ENCODE measurements at regions of chr20 and their contacts with region 1.

Region 1: GRCh38 chr20:35541783-35542588 is at the start of gene ERGIC3:
- DNase-seq: peak; percentile 96
- H3K4me3 Mint-ChIP-seq: peak within 1 kb of the TSS; percentile 90
- H3K27ac Mint-ChIP-seq: peak within 1 kb of the TSS; percentile 88
- H3K4me1 Mint-ChIP-seq: peaks cover 12% of the 10 kb centered on the region
- H3K27me3 Mint-ChIP-seq: no peaks in the 10 kb centered on the region
- total RNA-seq, gene ERGIC3: 132 and 137 TPM in 2 replicates

Region 2: GRCh38 chr20:34955232-34956040 is 586.5 kb before region 1 on chr20 and contains the starts of genes GSS and MYH7B:
- intact Hi-C with region 1: loop called (anchors 1 kb)
- DNase-seq: peak; percentile 97
- H3K4me3 Mint-ChIP-seq: peak within 1 kb of the TSS; percentile 94
- H3K27ac Mint-ChIP-seq: peak within 1 kb of the TSS; percentile 95
- H3K4me1 Mint-ChIP-seq: peaks cover 24% of the 10 kb centered on the region
- H3K27me3 Mint-ChIP-seq: peaks cover 3% of the 10 kb centered on the region
- total RNA-seq, gene GSS: 64.1 and 68.0 TPM in 2 replicates
- total RNA-seq, gene MYH7B: 0.20 and 0.44 TPM in 2 replicates

Region 3: GRCh38 chr20:35200255-35200654 is 341.7 kb before region 1 on chr20:
- intact Hi-C with region 1: no loop called
- DNase-seq: no peak
- H3K4me3 Mint-ChIP-seq: no peak overlapping the region
- H3K27ac Mint-ChIP-seq: no peak overlapping the region
- H3K4me1 Mint-ChIP-seq: no peaks in the 10 kb centered on the region
- H3K27me3 Mint-ChIP-seq: no peaks in the 10 kb centered on the region

Region 4: DNA sequence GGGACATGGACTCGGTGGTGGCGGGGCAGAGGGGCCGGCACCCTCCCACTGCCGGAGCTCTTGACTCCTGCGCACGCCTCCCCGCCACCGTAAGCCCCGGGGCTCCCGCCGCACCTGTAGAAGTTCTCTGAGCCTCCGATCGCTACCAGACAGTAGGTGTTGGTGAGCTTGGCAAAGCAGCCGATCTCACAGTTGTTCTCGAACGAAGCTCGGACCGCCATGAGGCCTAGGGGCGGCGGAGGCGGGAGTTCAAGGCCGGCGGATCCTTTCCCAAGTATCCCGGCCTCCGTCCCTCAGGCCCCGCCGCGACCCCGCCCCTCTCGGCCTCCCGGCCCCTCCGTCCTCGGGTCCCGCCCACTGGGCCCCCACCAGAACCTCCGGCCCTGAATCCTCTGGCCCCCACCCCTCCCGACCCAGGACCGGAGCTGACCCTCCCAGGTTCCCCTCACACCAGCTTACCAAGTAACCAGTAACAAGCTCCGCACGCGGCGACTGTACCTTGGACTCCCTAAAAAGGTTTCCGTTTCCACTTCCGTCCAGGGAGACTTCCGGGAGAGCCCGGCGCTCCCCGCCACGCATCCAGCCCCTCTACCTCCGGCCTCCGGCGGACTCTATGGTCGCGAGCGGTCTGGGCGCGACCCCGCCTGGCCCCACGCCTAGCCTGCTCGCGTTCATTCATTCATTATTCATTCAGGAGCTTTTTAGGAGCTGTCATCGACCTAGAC is 257.6 kb before region 1 on chr20 and contains the start of gene EIF6:
- intact Hi-C with region 1: loop called (anchors 5 kb)
- DNase-seq: peak; percentile 73
- H3K4me3 Mint-ChIP-seq: peak within 1 kb of the TSS; percentile 93
- H3K27ac Mint-ChIP-seq: peak within 1 kb of the TSS; percentile 95
- H3K4me1 Mint-ChIP-seq: peaks cover 28% of the 10 kb centered on the region
- H3K27me3 Mint-ChIP-seq: peaks cover 2% of the 10 kb centered on the region
- total RNA-seq, gene EIF6: 232 TPM in 2 replicates

Region 5: DNA sequence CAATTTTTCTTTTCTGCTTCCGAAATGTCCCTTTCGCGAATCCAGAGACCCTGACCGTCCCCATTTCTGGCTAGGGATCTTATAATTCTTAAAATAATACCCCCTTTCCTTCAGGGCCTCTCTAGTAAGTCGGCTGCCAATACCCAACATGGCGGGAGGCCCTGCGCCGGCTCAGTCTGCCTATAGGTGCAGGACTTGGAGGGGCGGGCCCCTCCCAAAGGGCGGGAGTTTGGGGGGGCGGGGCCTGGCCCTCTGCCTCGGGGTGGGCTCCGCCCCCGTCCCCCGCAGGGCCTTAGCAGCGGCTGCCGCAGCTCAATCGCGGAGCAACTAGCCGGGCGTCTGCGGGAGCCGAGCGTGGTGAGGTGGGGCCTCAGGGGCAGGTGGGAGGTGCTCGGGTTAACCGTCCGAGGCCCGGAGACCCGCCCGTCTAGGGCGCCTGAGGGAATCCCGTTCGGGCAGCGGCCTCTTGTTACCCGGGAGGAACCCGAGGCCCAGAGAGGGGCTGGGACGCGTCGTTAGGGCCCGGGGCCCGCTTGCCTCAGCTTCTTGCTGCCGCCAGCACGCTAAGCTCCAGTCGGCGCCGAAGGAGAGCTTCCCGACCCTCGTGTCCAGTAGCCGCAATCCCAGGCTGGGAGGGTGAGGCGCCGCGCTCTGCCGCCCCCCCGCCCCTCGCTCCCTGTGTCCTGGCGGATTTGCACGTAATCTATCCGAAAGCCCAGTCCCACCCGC is 86.9 kb before region 1 on chr20 and contains the start of gene CEP250:
- intact Hi-C with region 1: loop called (anchors 1 kb)
- DNase-seq: peak; percentile 88
- H3K4me3 Mint-ChIP-seq: peak within 1 kb of the TSS; percentile 93
- H3K27ac Mint-ChIP-seq: peak within 1 kb of the TSS; percentile 99
- H3K4me1 Mint-ChIP-seq: peaks cover 22% of the 10 kb centered on the region
- H3K27me3 Mint-ChIP-seq: no peaks in the 10 kb centered on the region
- total RNA-seq, gene CEP250: 44.4 and 45.6 TPM in 2 replicates

Region 6: DNA sequence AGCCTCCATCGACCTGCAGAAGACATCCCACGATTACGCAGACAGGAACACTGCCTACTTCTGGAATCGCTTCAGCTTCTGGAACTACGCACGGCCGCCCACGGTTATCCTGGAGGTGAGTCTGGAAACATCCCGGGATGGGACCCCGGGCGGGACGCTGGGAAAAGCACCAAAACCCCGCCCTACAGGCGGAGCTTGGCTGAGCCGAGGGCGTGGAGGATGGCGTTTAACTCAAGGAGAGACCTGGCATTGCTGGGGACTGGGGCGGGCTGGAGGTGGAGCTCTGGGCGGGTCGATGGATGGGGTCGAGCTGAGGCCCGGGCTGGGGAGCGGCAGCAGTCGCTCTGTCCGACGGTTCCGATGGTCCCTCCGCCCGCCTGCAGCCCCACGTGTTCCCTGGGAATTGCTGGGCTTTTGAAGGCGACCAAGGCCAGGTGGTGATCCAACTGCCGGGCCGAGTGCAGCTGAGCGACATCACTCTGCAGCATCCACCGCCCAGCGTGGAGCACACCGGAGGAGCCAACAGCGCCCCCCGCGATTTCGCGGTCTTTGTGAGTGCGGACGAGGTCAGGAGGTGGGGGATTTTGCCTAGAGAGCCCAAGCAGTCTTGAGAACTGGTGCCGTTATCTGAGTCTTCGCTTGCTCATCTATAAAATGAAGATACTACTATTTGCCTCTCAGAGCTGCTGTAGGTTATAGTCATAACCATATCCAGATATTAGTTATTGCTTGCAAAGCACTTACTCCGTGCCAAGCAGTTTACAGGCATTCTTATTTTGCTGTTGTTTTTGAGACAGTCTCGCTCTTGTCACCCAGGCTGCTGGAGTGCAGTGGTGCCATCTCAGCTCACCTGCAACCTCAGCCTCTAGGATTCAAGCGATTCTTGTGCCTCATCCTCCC is 77.5 kb after region 1 on chr20:
- intact Hi-C with region 1: loop called (anchors 1 kb)
- DNase-seq: peak; percentile 75
- H3K4me3 Mint-ChIP-seq: peak overlapping the region; percentile 88
- H3K27ac Mint-ChIP-seq: peak overlapping the region; percentile 89
- H3K4me1 Mint-ChIP-seq: peaks cover 27% of the 10 kb centered on the region
- H3K27me3 Mint-ChIP-seq: no peaks in the 10 kb centered on the region

Region 7: DNA sequence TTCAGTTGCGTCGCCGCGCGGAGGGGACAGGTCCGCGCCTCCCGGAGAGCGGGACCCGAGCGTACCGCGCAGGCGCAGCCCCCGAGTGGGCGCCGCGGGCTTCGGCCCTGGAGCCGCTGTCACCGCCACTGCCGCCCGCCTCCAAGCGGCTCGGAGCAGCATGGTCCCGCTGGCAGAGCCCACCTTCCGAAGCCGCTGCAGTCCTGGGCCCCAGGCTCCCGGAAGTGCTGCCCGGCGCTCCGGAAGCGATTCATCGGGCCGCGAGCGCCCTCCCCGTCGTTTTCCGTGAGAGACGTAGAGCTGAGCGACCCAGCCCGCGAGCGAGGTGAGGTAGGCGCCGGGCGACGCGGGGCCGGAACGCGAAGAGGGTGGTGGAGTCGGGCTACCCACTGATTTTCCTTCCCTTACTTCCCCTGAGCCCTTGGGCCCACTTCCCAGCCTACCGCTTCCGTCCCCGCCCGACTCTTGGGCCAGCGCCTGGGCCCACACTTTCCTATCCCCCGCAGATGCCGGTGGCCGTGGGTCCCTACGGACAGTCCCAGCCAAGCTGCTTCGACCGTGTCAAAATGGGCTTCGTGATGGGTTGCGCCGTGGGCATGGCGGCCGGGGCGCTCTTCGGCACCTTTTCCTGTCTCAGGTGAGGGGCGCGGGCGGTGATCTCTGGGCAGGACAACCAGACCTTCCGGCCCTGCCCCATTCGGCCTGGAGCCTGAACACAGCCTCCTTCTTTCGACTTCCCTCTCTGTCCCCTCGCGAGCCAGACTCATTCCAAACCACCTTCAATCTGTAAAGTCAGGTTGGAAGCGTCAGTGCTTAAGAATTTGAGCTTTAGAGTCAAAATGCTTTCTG is 157.4 kb after region 1 on chr20 and contains the starts of genes NFS1 and ROMO1:
- intact Hi-C with region 1: loop called (anchors 1 kb)
- DNase-seq: peak; percentile 80
- H3K4me3 Mint-ChIP-seq: peak within 1 kb of the TSS; percentile 92
- H3K27ac Mint-ChIP-seq: peak within 1 kb of the TSS; percentile 94
- H3K4me1 Mint-ChIP-seq: peaks cover 38% of the 10 kb centered on the region
- H3K27me3 Mint-ChIP-seq: no peaks in the 10 kb centered on the region
- total RNA-seq, gene NFS1: 35.7 and 36.2 TPM in 2 replicates
- total RNA-seq, gene ROMO1: 80.3 and 95.6 TPM in 2 replicates

Region 8: DNA sequence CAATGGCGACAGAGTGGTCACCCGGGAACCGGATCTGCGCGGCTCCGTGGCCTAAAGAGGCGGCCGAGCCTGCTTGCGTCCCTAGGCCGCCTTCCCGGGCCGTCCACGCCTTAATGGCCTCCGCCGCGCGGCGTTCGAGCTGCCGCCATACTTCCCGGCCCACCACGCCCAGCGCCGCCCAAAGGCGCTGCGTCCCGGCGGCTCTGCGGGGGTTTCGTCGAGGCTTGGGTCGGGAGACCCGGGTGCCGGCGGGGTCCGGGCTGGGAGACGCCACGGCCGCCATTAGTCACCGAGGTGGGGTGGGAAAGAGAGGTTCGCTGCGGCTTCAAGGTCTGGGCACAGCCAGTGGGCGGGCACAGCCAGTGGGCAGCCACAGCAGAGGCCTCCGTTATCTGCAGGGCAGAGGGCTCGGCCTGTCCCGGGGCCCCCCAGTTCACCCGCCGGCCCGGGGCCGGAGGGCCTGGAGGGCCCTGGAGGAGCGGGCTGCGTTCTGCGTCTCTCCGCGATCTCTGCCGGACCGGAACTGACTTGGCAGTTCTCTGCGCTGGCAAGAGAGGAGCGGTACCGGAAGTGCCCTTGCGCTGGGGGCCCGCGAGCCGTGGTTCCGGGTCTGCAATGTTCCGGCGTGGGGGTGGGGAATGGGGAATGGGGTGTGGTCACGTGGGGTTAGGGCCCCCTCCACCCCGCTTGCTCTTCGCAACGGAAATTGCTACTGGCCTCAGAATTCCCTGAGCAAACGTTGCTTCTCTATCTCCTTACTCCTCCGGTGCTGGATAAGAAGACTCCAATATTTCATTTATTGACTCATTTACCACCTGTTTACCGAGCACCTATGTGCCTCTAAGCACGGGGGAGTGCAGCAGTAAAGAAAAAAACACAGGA is 508.7 kb after region 1 on chr20:
- intact Hi-C with region 1: no loop called
- DNase-seq: peak; percentile 81
- H3K4me3 Mint-ChIP-seq: peak overlapping the region; percentile 97
- H3K27ac Mint-ChIP-seq: peak overlapping the region; percentile 90
- H3K4me1 Mint-ChIP-seq: peaks cover 39% of the 10 kb centered on the region
- H3K27me3 Mint-ChIP-seq: peaks cover 7% of the 10 kb centered on the region

Measured in activated T-helper 1 cell treated with anti-CD3 and anti-CD28 coated beads, Interleukin-12 subunit alpha, Interleukin-12 subunit beta, Interleukin-2, Interleukin-4 antibody, amounts not matched to agents 30 ng/mL and 10 ng/mL and 1 ng/mL, durations not matched to agents 14 hours and 24 hours and 36 hours (primary cell).